GM12878 (cell line): ENCODE measurements at regions of chr14 and their contacts with region 1.

Region 1: GRCh38 chr14:101843665-101844064 is 82.2 kb downstream of the PPP2R5C start:
- DNase-seq: peak; percentile 69
- ATAC-seq: peak; percentile 87
- H3K4me3 ChIP-seq: no peak overlapping the region
- H3K27ac ChIP-seq: peak overlapping the region; percentile 61
- H3K4me1 ChIP-seq: peaks cover 44% of the 10 kb centered on the region
- H3K27me3 ChIP-seq: no peaks in the 10 kb centered on the region
- CTCF ChIP-seq: peak; percentile 65 to 80 (median 68); a peak in 5 of 6 replicates
- EP300 ChIP-seq: no peak
- POLR2A ChIP-seq: no peak
- RAD21 ChIP-seq: peak; percentile 78

Region 2: DNA sequence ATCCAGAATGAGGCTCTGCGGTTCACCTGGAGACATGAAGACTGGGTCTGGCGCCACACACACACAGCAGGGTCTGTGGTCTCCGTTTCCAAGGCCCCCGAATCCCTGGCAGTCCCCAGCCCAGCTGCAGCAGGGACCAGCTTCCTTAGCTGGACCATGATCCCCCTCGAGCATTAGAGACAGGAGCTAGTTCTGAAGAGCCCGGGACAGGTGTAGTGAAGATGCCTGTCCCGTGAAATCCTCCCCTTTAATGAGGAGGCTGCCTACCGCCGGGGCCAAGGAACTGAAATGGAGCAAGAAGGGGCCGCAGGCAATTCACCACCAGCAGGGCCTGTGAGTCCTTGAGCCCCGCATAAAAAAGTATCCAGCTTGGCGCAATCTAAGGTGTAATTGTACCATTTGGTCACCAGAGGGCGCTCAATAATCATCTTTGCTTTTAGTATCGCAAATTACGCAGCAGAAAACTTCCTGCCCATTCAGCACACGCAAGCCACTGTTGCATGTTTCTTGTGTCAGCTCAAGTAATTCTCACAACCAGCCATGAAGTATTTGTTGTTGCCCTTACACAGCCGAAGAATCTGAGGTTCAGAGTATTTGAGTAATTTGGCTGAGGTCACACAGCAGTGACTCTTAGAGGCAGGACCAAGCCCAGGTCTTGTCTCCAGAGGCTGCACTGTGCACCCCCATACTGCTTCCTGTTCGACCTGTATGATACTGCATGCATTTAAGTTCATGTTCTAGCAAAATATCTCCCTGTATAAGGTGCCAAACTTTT is 136.4 kb before region 1 on chr14:
- CTCF ChIA-PET with region 1: interaction called, 11 read pairs
- POLR2A ChIA-PET with region 1: no interaction called
- RAD21 ChIA-PET with region 1: interaction called, 14 read pairs
- SMC1A ChIA-PET with region 1: interaction called, 20 read pairs
- in situ Hi-C with region 1: no loop called
- intact Hi-C with region 1: loop called (anchors 1 kb)
- DNase-seq: peak; percentile 53
- ATAC-seq: peak; percentile 78
- H3K4me3 ChIP-seq: no peak overlapping the region
- H3K27ac ChIP-seq: no peak overlapping the region
- H3K4me1 ChIP-seq: peaks cover 14% of the 10 kb centered on the region
- H3K27me3 ChIP-seq: no peaks in the 10 kb centered on the region; a peak in 2 of 4 replicates
- CTCF ChIP-seq: peak; percentile 65 to 87 (median 80)
- EP300 ChIP-seq: no peak
- POLR2A ChIP-seq: no peak
- RAD21 ChIP-seq: peak; percentile 92

Region 3: DNA sequence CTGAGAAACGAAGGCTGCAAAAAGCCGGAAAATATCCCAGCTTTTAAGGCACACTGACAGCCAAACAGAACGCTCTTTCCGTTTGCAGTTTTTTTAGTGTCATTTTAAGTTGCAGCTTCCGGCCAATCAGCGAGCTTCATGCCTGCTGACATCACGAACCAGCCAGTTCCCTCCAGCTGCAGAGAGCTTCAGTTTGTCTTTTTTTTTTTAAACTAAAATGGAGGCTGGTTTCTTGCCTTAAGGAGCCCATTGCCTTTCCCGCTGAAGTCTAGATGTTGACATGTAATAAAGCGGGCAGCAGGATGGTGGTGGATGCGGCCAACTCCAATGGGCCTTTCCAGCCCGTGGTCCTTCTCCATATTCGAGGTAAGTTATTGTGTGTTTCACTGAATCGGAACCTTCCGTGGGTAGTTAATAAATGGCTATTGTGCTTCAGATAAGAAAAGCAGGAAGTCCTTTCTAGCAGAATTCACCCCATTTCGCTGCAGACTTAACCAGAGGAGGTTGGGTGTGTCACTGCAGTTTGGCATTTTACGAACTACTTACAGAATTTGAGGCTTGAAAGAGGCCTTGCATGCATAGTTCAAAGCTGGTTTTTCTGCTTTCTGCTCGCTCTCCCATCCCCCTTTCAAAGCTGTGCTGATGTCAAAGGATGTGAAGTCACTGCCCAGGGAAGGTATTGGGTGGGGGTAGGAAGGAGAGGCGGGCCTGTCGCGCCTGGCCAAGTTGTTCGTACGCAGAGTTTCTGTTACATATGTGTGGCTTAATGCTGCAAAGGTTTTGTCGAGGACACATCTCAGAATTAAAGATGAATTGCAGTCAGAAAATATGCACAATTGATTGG is 33.8 kb before region 1 on chr14:
- CTCF ChIA-PET with region 1: interaction called, 11 read pairs
- POLR2A ChIA-PET with region 1: interaction called, 11 read pairs
- RAD21 ChIA-PET with region 1: interaction called, 22 read pairs
- SMC1A ChIA-PET with region 1: interaction called, 29 read pairs
- in situ Hi-C with region 1: no loop called
- intact Hi-C with region 1: loop called (anchors 2 kb)
- DNase-seq: peak; percentile 88
- ATAC-seq: peak; percentile 92
- H3K4me3 ChIP-seq: peak overlapping the region; percentile 93
- H3K27ac ChIP-seq: peak overlapping the region; percentile 100
- H3K4me1 ChIP-seq: peaks cover 20% of the 10 kb centered on the region
- H3K27me3 ChIP-seq: no peaks in the 10 kb centered on the region
- CTCF ChIP-seq: no peak
- EP300 ChIP-seq: peak; percentile 61 to 82; a peak in 3 of 4 replicates
- POLR2A ChIP-seq: peak; percentile 86
- RAD21 ChIP-seq: no peak

Region 4: DNA sequence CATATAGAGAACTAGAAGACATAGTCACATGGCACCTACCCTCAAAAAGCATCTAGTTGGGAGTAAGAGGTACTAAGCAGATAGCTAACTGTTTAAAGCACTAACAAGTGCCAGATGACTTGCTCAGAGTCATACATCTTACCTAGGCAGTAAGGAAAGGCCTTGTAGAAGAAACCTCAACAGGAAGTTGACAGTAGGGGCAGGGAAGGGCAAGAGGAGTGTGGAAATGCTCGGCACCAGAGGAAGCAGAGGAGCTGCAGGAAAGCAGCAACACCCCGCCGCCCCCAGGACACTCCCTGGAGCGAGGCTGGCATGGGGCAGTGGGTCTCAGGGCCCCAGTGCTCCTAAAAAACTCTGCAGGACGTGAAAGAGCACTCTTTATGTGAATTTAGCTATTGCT is 10.7 kb after region 1 on chr14:
- CTCF ChIA-PET with region 1: interaction called, 6 read pairs
- POLR2A ChIA-PET with region 1: interaction called, 3 read pairs
- RAD21 ChIA-PET with region 1: interaction called, 7 read pairs
- SMC1A ChIA-PET with region 1: interaction called, 13 read pairs
- in situ Hi-C with region 1: no loop called
- intact Hi-C with region 1: no loop called
- DNase-seq: no peak
- ATAC-seq: no peak
- H3K4me3 ChIP-seq: no peak overlapping the region
- H3K27ac ChIP-seq: 0 out of 2 replicates have a peak overlapping the region, but pooled peaks have one; percentile 3
- H3K4me1 ChIP-seq: peaks cover 29% of the 10 kb centered on the region
- H3K27me3 ChIP-seq: no peaks in the 10 kb centered on the region
- CTCF ChIP-seq: no peak
- EP300 ChIP-seq: no peak
- POLR2A ChIP-seq: no peak
- RAD21 ChIP-seq: no peak

Region 5: GRCh38 chr14:101876555-101876938 is 32.9 kb after region 1 on chr14:
- CTCF ChIA-PET with region 1: interaction called, 6 read pairs
- POLR2A ChIA-PET with region 1: no interaction called
- RAD21 ChIA-PET with region 1: interaction called, 10 read pairs
- SMC1A ChIA-PET with region 1: interaction called, 5 read pairs
- in situ Hi-C with region 1: no loop called
- intact Hi-C with region 1: loop called (anchors 5 kb)
- DNase-seq: peak; percentile 75
- ATAC-seq: peak; percentile 93
- H3K4me3 ChIP-seq: peak overlapping the region; percentile 33
- H3K27ac ChIP-seq: peak overlapping the region; percentile 92
- H3K4me1 ChIP-seq: peaks cover 49% of the 10 kb centered on the region
- H3K27me3 ChIP-seq: no peaks in the 10 kb centered on the region
- CTCF ChIP-seq: no peak
- EP300 ChIP-seq: peak; percentile 92 to 99
- POLR2A ChIP-seq: no peak
- RAD21 ChIP-seq: no peak

Region 6: GRCh38 chr14:102063091-102063802 is 219.6 kb after region 1 on chr14:
- CTCF ChIA-PET with region 1: no interaction called
- POLR2A ChIA-PET with region 1: no interaction called
- RAD21 ChIA-PET with region 1: no interaction called
- SMC1A ChIA-PET with region 1: no interaction called
- in situ Hi-C with region 1: no loop called
- intact Hi-C with region 1: no loop called
- DNase-seq: peak; percentile 31
- ATAC-seq: peak; percentile 98
- H3K4me3 ChIP-seq: no peak overlapping the region
- H3K27ac ChIP-seq: no peak overlapping the region
- H3K4me1 ChIP-seq: no peaks in the 10 kb centered on the region
- H3K27me3 ChIP-seq: no peaks in the 10 kb centered on the region
- CTCF ChIP-seq: peak; percentile 28 to 48 (median 37); a peak in 4 of 6 replicates
- EP300 ChIP-seq: no peak
- POLR2A ChIP-seq: no peak
- RAD21 ChIP-seq: peak; percentile 45